ENCODE measurements at regions of chr16 and their contacts with region 1.

Region 1: GRCh38 chr16:84284154-84284722 is 10.4 kb upstream of the WFDC1 start:
- DNase-seq: no peak
- ATAC-seq: no peak
- H3K4me3 Mint-ChIP-seq: no peak overlapping the region
- H3K27ac Mint-ChIP-seq: no peak overlapping the region
- H3K4me1 Mint-ChIP-seq: no peaks in the 10 kb centered on the region
- H3K27me3 Mint-ChIP-seq: peaks cover 5% of the 10 kb centered on the region
- CTCF ChIP-seq: no peak

Region 2: GRCh38 chr16:84484579-84485254 is 200.5 kb after region 1 on chr16:
- CTCF ChIA-PET with region 1: interaction called, 4 read pairs
- POLR2A ChIA-PET with region 1: no interaction called
- intact Hi-C with region 1: loop called (anchors 10 kb)
- DNase-seq: no peak
- ATAC-seq: no peak
- H3K4me3 Mint-ChIP-seq: no peak overlapping the region
- H3K27ac Mint-ChIP-seq: no peak overlapping the region
- H3K4me1 Mint-ChIP-seq: no peaks in the 10 kb centered on the region
- H3K27me3 Mint-ChIP-seq: no peaks in the 10 kb centered on the region
- CTCF ChIP-seq: peak; percentile 71

Region 3: DNA sequence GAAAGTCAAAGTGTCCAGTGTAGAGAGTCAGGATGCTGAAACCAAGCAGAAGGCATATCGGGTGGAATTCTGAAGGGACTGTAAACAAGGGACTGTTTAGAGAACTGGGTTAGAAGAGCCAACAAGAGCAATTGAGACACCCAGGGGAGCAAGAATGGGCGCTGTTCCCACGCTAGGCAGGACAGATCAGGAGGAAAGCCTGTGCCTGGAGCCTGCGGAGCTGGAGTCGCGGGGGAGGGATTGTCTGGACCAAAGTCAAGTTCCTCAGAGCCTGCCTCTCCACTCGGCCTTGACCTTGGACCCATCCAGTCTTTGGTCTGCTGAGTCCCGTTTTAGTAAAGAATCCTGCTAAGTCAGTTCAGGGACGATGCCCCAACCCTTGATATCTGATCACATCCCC is 349.4 kb after region 1 on chr16:
- CTCF ChIA-PET with region 1: no interaction called
- POLR2A ChIA-PET with region 1: no interaction called
- intact Hi-C with region 1: no loop called
- DNase-seq: no peak
- ATAC-seq: no peak
- H3K4me3 Mint-ChIP-seq: no peak overlapping the region
- H3K27ac Mint-ChIP-seq: no peak overlapping the region
- H3K4me1 Mint-ChIP-seq: peaks cover 31% of the 10 kb centered on the region
- H3K27me3 Mint-ChIP-seq: peaks cover 2% of the 10 kb centered on the region
- CTCF ChIP-seq: no peak

Measured in activated CD8-positive, alpha-beta T cell treated with anti-CD3 and anti-CD28 coated beads for 36 hours (primary cell).